Cardiac septum (tissue), 1 donor: ENCODE measurements at regions of chr11 and their contacts with region 1.

Region 1: GRCh38 chr11:95231127-95231880 is at the start of gene SESN3:
- DNase-seq: peak; percentile 100
- total RNA-seq, gene SESN3: 10.6 TPM

Region 2: DNA sequence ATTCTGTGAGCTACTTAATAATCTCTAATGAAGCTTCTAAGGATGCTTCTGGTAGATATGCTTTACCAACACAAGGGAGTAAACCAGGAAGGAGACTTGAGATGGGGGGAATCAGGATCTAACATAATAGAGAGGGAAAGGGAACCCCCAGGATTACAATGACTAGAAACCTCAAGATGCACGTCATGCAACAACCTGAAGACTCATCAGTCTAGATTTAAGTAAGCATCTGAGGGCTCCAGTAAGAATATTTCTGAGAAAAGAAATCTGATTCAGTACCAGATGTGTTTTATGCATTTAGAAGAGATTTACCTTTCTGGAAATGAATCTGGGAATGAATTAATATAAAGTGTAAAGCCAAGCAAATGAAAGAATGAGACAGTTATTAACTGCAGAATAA is 242.6 kb before region 1 on chr11:
- intact Hi-C with region 1: no loop called
- DNase-seq: no peak

Region 3: GRCh38 chr11:95089620-95090542 is 141.4 kb before region 1 on chr11 and contains the start of gene ENDOD1:
- intact Hi-C with region 1: loop called (anchors 10 kb)
- DNase-seq: peak; percentile 92
- total RNA-seq, gene ENDOD1: 13.3 TPM

Region 4: GRCh38 chr11:95279921-95280868 is 48.9 kb after region 1 on chr11:
- intact Hi-C with region 1: no loop called
- DNase-seq: no peak

Region 5: DNA sequence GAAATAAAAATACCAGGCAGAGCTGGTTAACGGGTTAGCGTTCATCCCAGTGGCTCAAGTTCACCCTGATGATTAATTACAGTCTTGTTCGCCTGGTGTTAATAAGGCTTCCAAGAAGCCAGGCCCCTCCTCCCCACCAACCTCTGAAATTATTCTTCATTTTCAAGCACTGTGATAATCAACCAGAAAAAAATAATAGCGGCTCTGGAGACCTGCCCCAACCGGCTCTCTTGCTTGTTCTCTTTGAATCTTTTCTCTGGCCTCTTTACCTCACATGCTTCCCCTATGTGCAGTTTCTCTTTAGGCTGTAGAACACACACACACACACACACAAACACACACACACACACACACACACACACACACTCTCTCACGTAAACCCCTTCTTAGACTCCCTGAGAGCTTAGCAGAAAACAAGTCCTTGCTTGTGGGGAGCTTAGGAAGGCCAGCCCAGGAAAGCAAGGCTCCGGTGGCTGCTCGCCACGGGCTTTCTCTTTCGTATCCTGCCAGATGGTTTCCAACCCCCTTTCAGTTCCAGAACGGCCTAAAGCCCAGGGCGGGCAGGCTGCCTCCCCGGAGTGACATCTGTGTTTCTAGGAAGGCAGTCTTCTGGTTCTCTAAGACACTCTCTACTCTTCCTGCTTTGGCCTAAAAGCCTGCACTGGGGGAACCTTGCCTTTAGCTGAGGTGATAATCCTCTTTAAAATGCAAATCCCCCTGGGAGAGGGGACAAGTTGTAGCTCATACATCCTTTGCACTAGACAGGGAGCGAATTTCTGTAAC is 106.1 kb after region 1 on chr11:
- intact Hi-C with region 1: loop called (anchors 1 kb)
- DNase-seq: peak; percentile 78

Region 6: GRCh38 chr11:95705485-95706124 is 474.3 kb after region 1 on chr11:
- intact Hi-C with region 1: loop called (anchors 5 kb)
- DNase-seq: peak; percentile 90